ENCODE measurements at regions of chr3 and their contacts with region 1.

Region 1: GRCh38 chr3:186109897-186110803 is 1.3 kb upstream of the ETV5 start:
- DNase-seq: no peak
- H3K4me3 ChIP-seq: peak overlapping the region; percentile 54 to 80 (median 68)
- H3K27ac ChIP-seq: peak overlapping the region; percentile 72 to 85
- H3K4me1 ChIP-seq: peaks cover 0 to 8% of the 10 kb centered on the region in 2 donors
- H3K27me3 ChIP-seq: peaks cover 0 to 11% of the 10 kb centered on the region in 2 donors
- CTCF ChIP-seq: no peak
- POLR2A ChIP-seq: no peak

Region 2: GRCh38 chr3:187968883-187969580 is 1858.9 kb after region 1 on chr3:
- intact Hi-C with region 1: loop called (anchors 5 kb)
- DNase-seq: peak in 1 of 2 donors; percentile 45
- H3K4me3 ChIP-seq: no peak overlapping the region
- H3K27ac ChIP-seq: peak overlapping the region in 1 of 2 donors; percentile 33
- H3K4me1 ChIP-seq: no peaks in the 10 kb centered on the region
- H3K27me3 ChIP-seq: no peaks in the 10 kb centered on the region
- CTCF ChIP-seq: no peak
- POLR2A ChIP-seq: no peak